Caco-2 (cell line): ENCODE measurements at regions of chr7 and their contacts with region 1.

Region 1: GRCh38 chr7:7566651-7567611 is at the start of gene MIOS:
- DNase-seq: peak; percentile 95 to 97
- H3K4me3 ChIP-seq: peak within 1 kb of the TSS; percentile 53
- H3K4me3 Mint-ChIP-seq: no peak within 1 kb of the TSS
- H3K27ac Mint-ChIP-seq: no peak within 1 kb of the TSS
- H3K4me1 ChIP-seq: peaks cover 34% of the 10 kb centered on the region
- H3K4me1 Mint-ChIP-seq: peaks cover 20% of the 10 kb centered on the region
- H3K27me3 ChIP-seq: no peaks in the 10 kb centered on the region
- H3K27me3 Mint-ChIP-seq: no peaks in the 10 kb centered on the region
- CTCF ChIP-seq: no peak
- total RNA-seq, gene MIOS: 32.1 and 37.3 TPM in 2 replicates

Region 2: GRCh38 chr7:7114706-7115295 is 452.1 kb before region 1 on chr7:
- CTCF ChIA-PET with region 1: no interaction called
- POLR2A ChIA-PET with region 1: no interaction called
- intact Hi-C with region 1: loop called (anchors 10 kb)
- DNase-seq: peak; percentile 55 to 63
- H3K4me3 ChIP-seq: no peak overlapping the region
- H3K4me3 Mint-ChIP-seq: peak overlapping the region; percentile 23
- H3K27ac Mint-ChIP-seq: peak overlapping the region; percentile 6
- H3K4me1 ChIP-seq: peaks cover 64% of the 10 kb centered on the region
- H3K4me1 Mint-ChIP-seq: peaks cover 64% of the 10 kb centered on the region
- H3K27me3 ChIP-seq: no peaks in the 10 kb centered on the region
- H3K27me3 Mint-ChIP-seq: no peaks in the 10 kb centered on the region
- CTCF ChIP-seq: no peak

Region 3: GRCh38 chr7:7640221-7641128 is 73.5 kb after region 1 on chr7 and contains the start of gene UMAD1:
- CTCF ChIA-PET with region 1: no interaction called
- POLR2A ChIA-PET with region 1: interaction called, 4 read pairs
- intact Hi-C with region 1: loop called (anchors 1 kb)
- DNase-seq: peak; percentile 99 to 100
- H3K4me3 ChIP-seq: peak within 1 kb of the TSS; percentile 98
- H3K4me3 Mint-ChIP-seq: peak within 1 kb of the TSS; percentile 88
- H3K27ac Mint-ChIP-seq: peak within 1 kb of the TSS; percentile 97
- H3K4me1 ChIP-seq: peaks cover 15% of the 10 kb centered on the region
- H3K4me1 Mint-ChIP-seq: peaks cover 24% of the 10 kb centered on the region
- H3K27me3 ChIP-seq: no peaks in the 10 kb centered on the region
- H3K27me3 Mint-ChIP-seq: no peaks in the 10 kb centered on the region
- CTCF ChIP-seq: no peak
- total RNA-seq, gene UMAD1: 20.0 and 20.3 TPM in 2 replicates

Region 4: GRCh38 chr7:7996576-7996975 is 429.6 kb after region 1 on chr7:
- CTCF ChIA-PET with region 1: no interaction called
- POLR2A ChIA-PET with region 1: no interaction called
- intact Hi-C with region 1: loop called (anchors 10 kb)
- DNase-seq: peak; percentile 66 to 77
- H3K4me3 ChIP-seq: no peak overlapping the region
- H3K4me3 Mint-ChIP-seq: peak overlapping the region; percentile 26
- H3K27ac Mint-ChIP-seq: peak overlapping the region; percentile 84
- H3K4me1 ChIP-seq: peaks cover 18% of the 10 kb centered on the region
- H3K4me1 Mint-ChIP-seq: peaks cover 10% of the 10 kb centered on the region
- H3K27me3 ChIP-seq: no peaks in the 10 kb centered on the region
- H3K27me3 Mint-ChIP-seq: no peaks in the 10 kb centered on the region
- CTCF ChIP-seq: no peak